ENCODE measurements at regions of chr1 and their contacts with region 1.

Region 1: GRCh38 chr1:168342572-168343280 is 62.0 kb downstream of the TBX19 start:
- DNase-seq: peak; percentile 81 to 96 (median 92)
- H3K4me3 ChIP-seq: peak overlapping the region in 50 of 59 donors; percentile 5 to 60 (median 39)
- H3K27ac ChIP-seq: peak overlapping the region in 58 of 59 donors; percentile 2 to 90 (median 78)
- H3K27me3 ChIP-seq: no peaks in the 10 kb centered on the region
- CTCF ChIP-seq: peak; percentile 75 to 95 (median 90)

Region 2: GRCh38 chr1:168178638-168179437 is 163.9 kb before region 1 on chr1 and contains the start of gene TIPRL:
- intact Hi-C with region 1: loop called in 1 of 2 experiments (anchors 2 kb)
- DNase-seq: peak; percentile 90 to 97 (median 96)
- H3K4me3 ChIP-seq: peak within 1 kb of the TSS; percentile 71 to 99 (median 86)
- H3K27ac ChIP-seq: peak within 1 kb of the TSS; percentile 52 to 99 (median 92)
- H3K27me3 ChIP-seq: peaks cover 0 to 18% (median 0%) of the 10 kb centered on the region in 45 donors
- CTCF ChIP-seq: peak; percentile 40 to 92 (median 78)
- total RNA-seq, gene TIPRL: 14.6 to 51.2 (median 34.7) TPM

Region 3: GRCh38 chr1:168234846-168235547 is 107.7 kb before region 1 on chr1:
- intact Hi-C with region 1: loop called in 1 of 2 experiments (anchors 5 kb)
- DNase-seq: no peak
- H3K4me3 ChIP-seq: no peak overlapping the region
- H3K27ac ChIP-seq: peak overlapping the region in 37 of 59 donors; percentile 3 to 92 (median 83)
- H3K27me3 ChIP-seq: no peaks in the 10 kb centered on the region
- CTCF ChIP-seq: peak in 54 of 56 donors; percentile 25 to 72 (median 56)

Region 4: DNA sequence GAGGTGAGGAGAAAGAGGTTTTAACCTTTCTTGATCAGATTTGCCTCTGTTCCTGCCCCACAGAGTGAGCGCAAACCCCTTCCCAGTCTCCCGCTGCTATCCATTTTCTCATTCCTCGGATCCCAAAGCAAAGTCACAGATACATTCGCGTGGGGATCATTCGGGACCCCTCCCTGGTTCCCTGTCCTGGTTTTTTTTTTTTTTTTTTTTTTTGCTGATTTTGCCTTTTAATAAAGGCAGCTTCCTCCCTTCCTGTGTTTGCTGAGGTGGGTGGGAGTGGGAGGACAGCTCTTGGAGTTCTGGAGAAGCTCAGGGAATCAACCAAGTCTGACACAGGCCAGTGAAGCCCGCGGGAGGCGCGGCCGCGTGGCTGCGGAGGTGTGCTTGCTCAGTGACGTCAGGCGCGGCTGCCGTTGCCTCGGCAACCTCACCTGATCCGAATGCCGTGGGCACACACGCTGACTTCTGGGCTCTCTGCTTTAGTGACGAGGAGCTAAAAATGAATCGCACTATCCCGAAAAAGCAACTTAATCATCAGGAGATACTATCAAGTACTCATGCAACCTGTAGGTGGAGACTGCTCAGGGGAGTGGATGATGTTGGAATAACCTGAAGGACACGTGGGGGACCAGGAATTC is 44.3 kb after region 1 on chr1:
- intact Hi-C with region 1: no loop called
- DNase-seq: peak; percentile 36 to 87 (median 76)
- H3K4me3 ChIP-seq: peak overlapping the region in 29 of 59 donors; percentile 3 to 40 (median 25)
- H3K27ac ChIP-seq: peak overlapping the region in 29 of 59 donors; percentile 1 to 77 (median 51)
- H3K27me3 ChIP-seq: peaks cover 0 to 8% (median 0%) of the 10 kb centered on the region in 45 donors
- CTCF ChIP-seq: no peak

Region 5: GRCh38 chr1:168466092-168466713 is 123.5 kb after region 1 on chr1:
- intact Hi-C with region 1: no loop called
- DNase-seq: no peak
- H3K4me3 ChIP-seq: no peak overlapping the region
- H3K27ac ChIP-seq: no peak overlapping the region
- H3K27me3 ChIP-seq: peaks cover 0 to 4% (median 0%) of the 10 kb centered on the region in 45 donors
- CTCF ChIP-seq: no peak

Region 6: DNA sequence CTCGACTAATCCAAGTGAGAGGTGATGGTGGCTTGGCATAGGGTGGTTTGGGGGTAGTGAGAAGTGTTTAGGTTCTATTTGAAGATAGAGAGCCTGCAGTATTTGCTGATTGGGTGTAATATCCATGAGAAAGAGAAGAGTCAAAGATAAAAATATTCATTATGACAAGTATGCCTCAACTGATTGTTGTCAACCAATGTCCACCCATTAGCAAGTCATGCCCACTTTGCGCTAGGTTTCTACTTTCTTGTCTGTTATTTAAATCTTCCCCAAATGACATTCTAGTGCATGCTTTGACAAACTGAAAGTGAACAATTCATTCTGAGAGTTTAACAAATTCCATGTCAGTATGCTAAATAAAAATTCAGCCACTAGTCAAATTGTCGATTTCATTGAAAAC is 229.9 kb after region 1 on chr1:
- intact Hi-C with region 1: loop called in 1 of 2 experiments (anchors 10 kb)
- DNase-seq: no peak
- H3K4me3 ChIP-seq: no peak overlapping the region
- H3K27ac ChIP-seq: no peak overlapping the region
- H3K27me3 ChIP-seq: peaks cover 0 to 4% (median 0%) of the 10 kb centered on the region in 45 donors
- CTCF ChIP-seq: no peak

Region 7: GRCh38 chr1:169115891-169116585 is 773.3 kb after region 1 on chr1:
- intact Hi-C with region 1: no loop called
- DNase-seq: peak in 4 of 10 donors; percentile 46 to 54 (median 49)
- H3K4me3 ChIP-seq: peak overlapping the region in 55 of 59 donors; percentile 2 to 81 (median 33)
- H3K27ac ChIP-seq: peak overlapping the region in 57 of 59 donors; percentile 16 to 98 (median 71)
- H3K27me3 ChIP-seq: no peaks in the 10 kb centered on the region
- CTCF ChIP-seq: no peak

Measured in dorsolateral prefrontal cortex (tissue), 120 donors.